ACHN (cell line): ENCODE measurements at regions of chr7 and their contacts with region 1.

Region 1: DNA sequence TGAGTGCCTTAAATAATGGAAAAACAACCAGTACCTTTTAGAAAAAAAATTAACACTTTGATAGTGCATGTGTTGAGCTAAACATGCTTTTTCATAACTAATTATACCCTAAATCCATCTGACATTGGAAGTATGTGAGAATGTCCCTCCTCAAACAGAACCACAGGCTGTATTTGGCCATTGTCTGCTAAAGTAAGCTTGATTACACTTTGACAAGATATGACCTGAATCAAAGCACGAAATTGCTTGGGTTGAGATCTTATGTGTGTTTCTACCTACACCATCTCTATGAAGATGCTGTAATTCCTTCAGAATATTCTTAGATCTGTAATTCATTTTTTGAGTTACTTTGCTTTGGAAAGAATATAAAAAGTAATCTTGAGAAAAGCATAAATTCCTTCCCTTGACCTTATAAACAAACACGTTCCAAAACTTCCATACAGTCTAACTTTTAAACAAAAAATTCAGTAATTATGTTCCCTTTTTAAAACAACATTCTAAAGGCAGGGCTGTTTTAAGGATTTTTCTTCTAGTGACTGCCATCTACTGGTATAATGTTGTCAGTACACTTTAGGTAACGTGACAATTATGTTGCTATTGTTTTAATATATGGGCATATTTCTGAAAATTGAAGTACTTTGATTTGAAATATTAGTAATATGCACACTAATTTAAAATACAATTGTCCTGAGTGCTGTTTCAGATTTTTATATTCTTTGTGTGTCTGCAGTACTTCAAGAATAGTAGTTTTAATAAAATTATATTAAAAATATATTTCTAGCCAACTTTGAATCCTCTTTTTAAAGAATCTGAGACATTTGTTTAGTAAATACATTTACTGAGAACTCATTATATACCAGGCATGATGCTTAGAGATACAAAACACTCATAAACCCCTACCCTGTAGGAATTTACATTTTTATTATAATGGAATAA is 20.9 kb downstream of the CD36 start:
- DNase-seq: peak; percentile 56

Region 2: GRCh38 chr7:79912213-79912633 is 747.2 kb before region 1 on chr7:
- in situ Hi-C with region 1: no loop called
- DNase-seq: no peak

Region 3: GRCh38 chr7:80335511-80336231 is 323.7 kb before region 1 on chr7:
- in situ Hi-C with region 1: no loop called
- DNase-seq: no peak

Region 4: GRCh38 chr7:80428161-80429054 is 231.0 kb before region 1 on chr7:
- in situ Hi-C with region 1: loop called (anchors 25 kb)
- DNase-seq: peak; percentile 81

Region 5: DNA sequence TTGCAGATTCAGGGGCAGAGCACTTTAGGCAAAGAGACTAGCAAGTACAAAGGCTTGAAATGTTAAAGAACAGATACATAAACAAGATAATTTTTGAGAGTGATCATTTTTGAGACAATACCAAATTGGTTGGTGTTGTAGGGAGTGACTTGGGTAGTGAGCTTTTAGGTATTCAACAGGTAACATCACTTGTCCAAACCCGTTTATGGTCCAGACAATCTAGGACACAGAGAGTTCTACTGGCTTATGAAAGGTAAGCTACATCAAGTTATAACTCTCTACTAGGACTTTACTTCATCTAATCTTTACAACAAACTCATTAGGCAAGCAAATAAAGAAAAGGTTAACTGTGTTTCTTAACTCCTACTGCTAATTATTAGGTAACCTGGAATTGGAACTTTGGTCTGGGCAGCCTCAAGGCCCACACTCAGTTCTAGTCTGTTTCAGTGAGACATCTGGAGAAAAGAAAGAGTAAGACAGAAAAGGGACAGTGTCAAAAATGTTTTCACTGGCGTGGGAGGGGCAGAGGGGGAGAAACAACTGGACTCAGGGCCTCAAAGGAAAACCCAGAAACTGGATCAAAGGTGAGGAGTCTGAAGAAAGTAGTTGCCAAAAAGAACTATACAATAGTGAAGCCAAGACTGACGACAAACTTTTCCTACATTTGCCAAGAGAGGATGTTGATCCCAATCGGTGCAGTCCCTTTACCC is 186.7 kb before region 1 on chr7:
- in situ Hi-C with region 1: no loop called
- DNase-seq: no peak